CD8-positive, alpha-beta memory T cell (primary cell): ENCODE measurements at regions of chr14 and their contacts with region 1.

Region 1: GRCh38 chr14:20682435-20683124 is 1.8 kb upstream of the RNASE4 start:
- DNase-seq: peak; percentile 70 to 89 (median 81)
- H3K4me3 ChIP-seq: peak overlapping the region; percentile 97
- H3K4me3 Mint-ChIP-seq: no peak overlapping the region
- H3K27ac ChIP-seq: peak overlapping the region; percentile 96
- H3K27ac Mint-ChIP-seq: no peak overlapping the region
- H3K4me1 ChIP-seq: peaks cover 25% of the 10 kb centered on the region
- H3K4me1 Mint-ChIP-seq: peaks cover 6 to 10% (median 9%) of the 10 kb centered on the region in 3 donors
- H3K27me3 ChIP-seq: no peaks in the 10 kb centered on the region
- H3K27me3 Mint-ChIP-seq: peaks cover 0 to 4% of the 10 kb centered on the region in 2 donors

Region 2: DNA sequence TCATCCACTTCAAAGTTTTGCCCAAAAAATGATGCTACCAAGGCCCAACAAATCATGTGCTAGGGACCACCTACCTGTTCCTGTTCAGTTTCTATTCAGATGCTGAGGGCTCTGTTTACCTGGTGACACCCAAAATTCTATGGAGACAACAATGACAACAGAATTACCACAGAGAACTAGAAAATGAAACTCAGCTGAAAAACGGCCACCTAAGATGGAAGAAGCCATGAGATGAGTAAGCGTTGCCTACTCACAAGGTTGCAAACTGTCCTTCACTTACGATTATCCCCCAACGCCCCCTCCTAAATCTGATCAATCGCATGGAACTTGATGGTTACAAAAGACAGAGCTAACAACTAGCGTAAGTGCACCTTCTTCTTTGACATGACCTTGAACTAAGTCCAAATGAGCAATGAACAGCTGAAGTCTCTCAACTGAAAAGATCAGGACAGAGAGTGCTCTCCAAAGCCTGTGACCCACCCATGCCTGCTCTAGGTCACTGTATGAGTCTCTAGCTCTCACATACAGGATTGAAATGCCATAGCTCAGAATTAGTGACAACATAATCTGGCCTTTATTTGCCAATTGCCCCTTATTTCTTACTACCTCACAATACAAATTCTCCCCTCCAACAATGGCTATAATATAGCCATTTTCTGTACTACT is 95.0 kb before region 1 on chr14 and contains the start of gene RNASE11:
- CTCF ChIA-PET with region 1: no interaction called
- POLR2A ChIA-PET with region 1: no interaction called
- DNase-seq: no peak
- H3K4me3 ChIP-seq: no peak within 1 kb of the TSS
- H3K4me3 Mint-ChIP-seq: no peak within 1 kb of the TSS
- H3K27ac ChIP-seq: no peak within 1 kb of the TSS
- H3K27ac Mint-ChIP-seq: no peak within 1 kb of the TSS
- H3K4me1 ChIP-seq: no peaks in the 10 kb centered on the region
- H3K4me1 Mint-ChIP-seq: peaks cover 0 to 9% (median 0%) of the 10 kb centered on the region in 3 donors
- H3K27me3 ChIP-seq: peaks cover 3% of the 10 kb centered on the region
- H3K27me3 Mint-ChIP-seq: peaks cover 1 to 34% of the 10 kb centered on the region in 2 donors
- total RNA-seq, gene RNASE11: not detected

Region 3: GRCh38 chr14:20632682-20633428 is 49.7 kb before region 1 on chr14:
- CTCF ChIA-PET with region 1: interaction called, 18 read pairs
- POLR2A ChIA-PET with region 1: interaction called, 14 read pairs
- DNase-seq: peak in 4 of 5 donors; percentile 47 to 71 (median 68)
- H3K4me3 ChIP-seq: peak overlapping the region; percentile 69
- H3K4me3 Mint-ChIP-seq: peak overlapping the region; percentile 86 to 94 (median 89)
- H3K27ac ChIP-seq: no peak overlapping the region
- H3K27ac Mint-ChIP-seq: peak overlapping the region in 7 of 8 donors; percentile 22 to 94 (median 85)
- H3K4me1 ChIP-seq: peaks cover 23% of the 10 kb centered on the region
- H3K4me1 Mint-ChIP-seq: peaks cover 43 to 63% (median 59%) of the 10 kb centered on the region in 3 donors
- H3K27me3 ChIP-seq: no peaks in the 10 kb centered on the region
- H3K27me3 Mint-ChIP-seq: peaks cover 23 to 32% of the 10 kb centered on the region in 2 donors